ENCODE measurements at regions of chr3 and their contacts with region 1.

Region 1: DNA sequence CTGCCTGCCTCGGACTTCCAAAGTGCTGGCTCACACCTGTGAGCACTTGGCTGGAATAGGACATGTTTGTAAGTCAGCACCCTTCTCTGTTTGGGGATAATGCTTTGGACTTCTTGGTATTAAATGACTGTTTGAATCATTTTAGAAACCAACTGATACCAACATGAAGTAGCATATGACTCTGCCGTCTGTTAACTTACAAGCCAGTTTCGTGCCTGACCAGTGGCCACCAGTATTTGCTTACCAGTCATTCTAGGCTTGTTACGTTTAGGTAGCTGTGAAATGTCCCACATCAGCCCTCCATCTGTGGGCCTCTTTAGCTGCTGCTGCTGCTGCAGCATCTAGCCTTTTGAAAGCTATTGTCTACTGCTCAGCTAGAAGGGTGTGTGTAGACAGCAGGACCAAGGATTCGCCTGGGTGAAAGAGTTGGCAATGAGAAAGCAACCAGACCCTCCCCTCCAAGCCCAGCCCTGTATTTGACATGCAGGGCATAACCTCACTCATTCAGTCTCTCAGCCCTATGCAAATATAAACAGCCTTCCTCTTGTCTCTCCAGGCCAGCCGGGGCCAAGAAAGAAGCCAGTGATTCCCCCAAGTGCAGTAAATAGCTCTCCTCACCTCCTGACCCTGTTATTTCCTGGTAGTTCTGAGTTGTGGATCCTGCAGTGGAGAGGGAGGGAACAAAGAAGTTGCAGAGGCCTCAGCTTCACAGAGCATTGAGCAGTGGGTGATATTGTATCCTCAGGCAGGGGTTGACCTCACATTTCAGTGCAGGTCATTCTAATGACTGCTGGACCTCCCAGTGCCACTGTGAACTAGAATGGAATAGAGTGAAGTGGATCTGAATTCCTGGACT is 51.0 kb downstream of the NKIRAS1 start:
- DNase-seq: no peak
- ATAC-seq: peak; percentile 6
- H3K4me3 ChIP-seq: no peak overlapping the region
- H3K4me3 Mint-ChIP-seq: no peak overlapping the region
- H3K27ac ChIP-seq: no peak overlapping the region
- H3K27ac Mint-ChIP-seq: peak overlapping the region in 6 of 9 donors; percentile 6 to 74 (median 29)
- H3K4me1 ChIP-seq: no peaks in the 10 kb centered on the region
- H3K4me1 Mint-ChIP-seq: peaks cover 10 to 77% (median 50%) of the 10 kb centered on the region in 7 donors
- H3K27me3 ChIP-seq: no peaks in the 10 kb centered on the region
- H3K27me3 Mint-ChIP-seq: no peaks in the 10 kb centered on the region

Region 2: DNA sequence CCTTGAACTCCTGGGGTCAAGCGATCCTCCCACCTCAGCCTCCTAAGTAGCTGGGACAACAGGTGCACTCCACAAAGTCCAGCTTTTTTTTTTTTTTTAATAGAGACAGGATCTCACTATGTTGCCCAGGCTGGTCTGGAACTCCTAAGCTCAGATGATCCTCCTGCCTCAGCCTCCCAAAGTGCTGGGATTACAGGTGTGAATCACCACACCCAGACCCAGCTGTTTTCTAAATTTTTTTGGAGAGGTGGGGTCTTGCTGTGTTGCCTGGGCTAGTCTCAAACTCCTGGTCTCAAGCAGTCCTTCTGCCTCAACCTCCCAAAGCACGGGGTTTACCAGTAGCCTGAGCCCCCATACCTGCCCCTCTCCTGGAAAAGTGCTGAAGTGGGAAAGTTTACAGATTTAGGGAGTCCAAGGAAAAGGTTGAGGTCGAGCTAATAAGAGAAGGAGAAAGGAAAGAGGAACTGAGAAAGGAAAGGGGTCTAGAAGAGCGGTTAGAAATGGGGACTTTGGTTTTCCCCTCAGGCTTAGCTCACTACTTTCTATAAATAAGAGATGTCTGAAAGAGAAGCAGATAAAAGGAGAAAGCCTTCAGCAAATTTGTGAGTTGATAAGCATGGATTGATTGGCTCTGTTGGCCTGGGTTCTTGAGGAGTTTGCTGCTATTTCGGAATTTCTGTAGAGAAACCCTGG is 36.4 kb before region 1 on chr3:
- CTCF ChIA-PET with region 1: no interaction called
- POLR2A ChIA-PET with region 1: interaction called, 4 read pairs
- intact Hi-C with region 1: loop called in 1 of 2 experiments (anchors 5 kb)
- DNase-seq: no peak
- ATAC-seq: no peak
- H3K4me3 ChIP-seq: no peak overlapping the region
- H3K4me3 Mint-ChIP-seq: no peak overlapping the region
- H3K27ac ChIP-seq: no peak overlapping the region
- H3K27ac Mint-ChIP-seq: no peak overlapping the region
- H3K4me1 ChIP-seq: peaks cover 4 to 11% of the 10 kb centered on the region in 2 donors
- H3K4me1 Mint-ChIP-seq: peaks cover 30 to 82% (median 66%) of the 10 kb centered on the region in 7 donors
- H3K27me3 ChIP-seq: no peaks in the 10 kb centered on the region
- H3K27me3 Mint-ChIP-seq: no peaks in the 10 kb centered on the region

Region 3: DNA sequence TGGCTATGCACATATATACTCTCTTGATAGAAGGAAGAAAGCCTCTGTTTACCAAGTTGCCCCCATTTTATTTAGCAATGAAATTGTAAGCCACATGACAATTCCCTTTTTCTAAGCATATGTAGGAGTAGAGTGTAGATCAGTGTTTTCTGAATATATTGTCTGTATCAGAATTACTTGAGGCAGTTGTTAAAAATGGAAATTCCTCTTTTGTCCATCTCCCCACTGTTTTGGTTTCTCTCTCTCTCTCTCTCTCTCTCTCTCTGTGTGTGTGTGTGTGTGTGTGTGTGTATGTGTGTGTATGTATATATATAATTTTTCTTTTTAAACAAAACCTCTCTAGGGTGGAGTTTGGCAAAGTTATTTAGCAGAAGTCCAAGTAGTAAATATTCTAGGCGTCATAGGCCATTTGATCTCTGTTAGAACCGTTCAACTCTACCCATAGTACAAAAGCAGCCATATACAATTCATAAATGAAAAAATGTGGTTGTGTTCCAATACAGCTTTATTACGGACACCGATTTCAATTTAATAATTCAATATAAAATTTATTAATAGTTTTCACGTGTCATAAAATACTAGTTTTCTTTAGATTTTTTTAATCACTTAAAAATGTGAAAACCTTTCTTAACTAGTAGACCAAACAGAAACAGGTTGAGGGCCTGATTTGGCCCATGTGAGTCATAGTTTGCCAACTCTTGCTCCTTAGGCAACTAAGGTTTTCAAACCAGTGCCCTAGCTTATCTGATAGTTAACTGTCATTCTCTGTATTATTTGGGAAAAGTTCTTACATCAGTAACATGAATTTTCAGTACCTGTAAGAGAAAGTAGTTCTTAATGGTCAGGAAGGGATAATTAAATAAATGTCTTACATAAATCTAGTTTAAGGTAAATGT is 20.2 kb before region 1 on chr3:
- CTCF ChIA-PET with region 1: no interaction called
- POLR2A ChIA-PET with region 1: no interaction called
- intact Hi-C with region 1: loop called in 1 of 2 experiments (anchors 2 kb)
- DNase-seq: no peak
- ATAC-seq: no peak
- H3K4me3 ChIP-seq: no peak overlapping the region
- H3K4me3 Mint-ChIP-seq: no peak overlapping the region
- H3K27ac ChIP-seq: no peak overlapping the region
- H3K27ac Mint-ChIP-seq: no peak overlapping the region
- H3K4me1 ChIP-seq: no peaks in the 10 kb centered on the region
- H3K4me1 Mint-ChIP-seq: peaks cover 2 to 48% (median 39%) of the 10 kb centered on the region in 7 donors
- H3K27me3 ChIP-seq: no peaks in the 10 kb centered on the region
- H3K27me3 Mint-ChIP-seq: no peaks in the 10 kb centered on the region

Region 4: DNA sequence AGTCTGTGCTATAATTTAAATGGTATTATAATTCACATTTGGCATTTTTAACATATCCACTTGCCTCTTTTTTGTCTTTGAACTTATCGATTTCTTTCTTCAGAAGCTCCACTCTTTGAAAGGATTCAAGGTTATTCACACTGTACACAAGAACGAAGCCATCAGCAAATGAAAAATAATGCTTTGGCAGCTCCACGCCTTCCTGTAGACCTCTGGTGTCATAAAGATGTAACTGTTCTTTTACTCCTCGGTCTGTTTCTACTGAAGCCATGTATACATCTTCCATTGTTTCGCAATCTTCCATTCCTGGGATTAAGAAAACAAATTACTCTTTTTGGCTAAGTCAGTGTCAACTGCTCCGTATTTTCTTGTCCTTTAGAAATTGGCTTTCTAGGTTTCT is 34.9 kb after region 1 on chr3:
- CTCF ChIA-PET with region 1: no interaction called
- POLR2A ChIA-PET with region 1: no interaction called
- intact Hi-C with region 1: no loop called
- DNase-seq: no peak
- ATAC-seq: no peak
- H3K4me3 ChIP-seq: no peak overlapping the region
- H3K4me3 Mint-ChIP-seq: no peak overlapping the region
- H3K27ac ChIP-seq: no peak overlapping the region
- H3K27ac Mint-ChIP-seq: peak overlapping the region in 1 of 9 donors; percentile 40
- H3K4me1 ChIP-seq: no peaks in the 10 kb centered on the region
- H3K4me1 Mint-ChIP-seq: peaks cover 0 to 12% (median 0%) of the 10 kb centered on the region in 7 donors
- H3K27me3 ChIP-seq: no peaks in the 10 kb centered on the region
- H3K27me3 Mint-ChIP-seq: no peaks in the 10 kb centered on the region

Measured in naive thymus-derived CD4-positive, alpha-beta T cell (primary cell).